ENCODE measurements at regions of chr10 and their contacts with region 1.

Region 1: GRCh38 chr10:71708301-71708703 is 11.3 kb downstream of the C10orf105 start:
- DNase-seq: peak; percentile 62 to 98
- H3K4me3 ChIP-seq: peak overlapping the region in 1 of 4 experiments; percentile 1; a peak in 1 of 8 replicates
- H3K27ac ChIP-seq: no peak overlapping the region
- H3K4me1 ChIP-seq: peaks cover 0 to 2% (median 0%) of the 10 kb centered on the region in 4 experiments; a peak in 2 of 7 replicates
- H3K27me3 ChIP-seq: peaks cover 0 to 3% (median 0%) of the 10 kb centered on the region in 4 experiments; a peak in 1 of 7 replicates
- CTCF ChIP-seq: peak; percentile 95 to 99 (median 98)
- EP300 ChIP-seq: no peak
- POLR2A ChIP-seq: no peak
- RAD21 ChIP-seq: peak; percentile 98 to 99

Region 2: GRCh38 chr10:71486484-71487114 is 221.7 kb before region 1 on chr10:
- CTCF ChIA-PET with region 1: interaction called, 13 read pairs
- POLR2A ChIA-PET with region 1: no interaction called
- DNase-seq: peak in 1 of 2 experiments; percentile 93
- H3K4me3 ChIP-seq: no peak overlapping the region
- H3K27ac ChIP-seq: no peak overlapping the region
- H3K4me1 ChIP-seq: peaks cover 0 to 6% (median 1%) of the 10 kb centered on the region in 4 experiments; a peak in 3 of 7 replicates
- H3K27me3 ChIP-seq: no peaks in the 10 kb centered on the region
- CTCF ChIP-seq: peak; percentile 92 to 99 (median 96)
- EP300 ChIP-seq: no peak
- POLR2A ChIP-seq: no peak
- RAD21 ChIP-seq: peak; percentile 92 to 94

Region 3: DNA sequence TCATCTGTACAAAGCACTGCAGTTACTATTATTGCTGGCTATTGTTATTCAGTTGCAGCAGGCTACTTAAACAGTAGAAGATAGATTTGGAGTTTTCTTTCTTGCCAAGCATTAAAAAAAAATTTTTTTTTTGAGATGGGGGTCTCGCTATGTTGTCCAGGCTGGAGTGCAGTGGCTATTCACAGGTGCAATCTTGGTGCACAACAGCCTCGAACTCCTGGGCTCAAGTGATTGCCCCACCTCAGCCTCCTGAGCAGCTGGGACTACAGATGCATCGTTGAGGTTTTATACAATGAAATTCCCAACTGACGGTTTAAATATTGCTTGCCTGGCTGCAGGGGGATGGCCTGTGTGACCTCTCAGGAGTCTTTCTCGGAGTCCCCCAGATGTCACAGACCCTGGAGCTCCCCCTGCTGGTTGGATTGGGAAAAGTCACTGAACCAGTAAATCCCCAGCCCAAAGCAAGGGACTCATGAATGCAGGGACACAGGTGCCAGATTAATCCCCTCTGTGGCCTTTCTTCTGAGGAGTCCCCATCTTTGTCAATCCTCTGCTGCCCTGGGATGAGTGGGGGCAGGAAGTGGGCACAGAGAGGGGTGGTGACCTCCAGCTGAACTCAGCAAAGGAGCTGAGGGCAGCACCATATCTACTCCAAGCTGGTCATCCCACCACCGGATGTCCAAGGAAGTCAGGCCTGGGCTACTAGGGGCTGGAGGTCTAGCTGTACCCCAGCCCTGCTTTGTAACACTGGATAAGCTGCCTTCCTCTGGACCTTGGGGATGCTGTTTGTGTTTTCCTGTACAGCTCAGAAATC is 138.3 kb before region 1 on chr10:
- CTCF ChIA-PET with region 1: interaction called, 20 read pairs
- POLR2A ChIA-PET with region 1: no interaction called
- DNase-seq: peak; percentile 59 to 98
- H3K4me3 ChIP-seq: no peak overlapping the region
- H3K27ac ChIP-seq: no peak overlapping the region
- H3K4me1 ChIP-seq: peaks cover 3 to 11% (median 6%) of the 10 kb centered on the region in 4 experiments; a peak in 5 of 7 replicates
- H3K27me3 ChIP-seq: 0 out of 7 replicates have a peak, but pooled peaks cover 0 to 2% (median 0%) of the 10 kb centered on the region in 4 experiments
- CTCF ChIP-seq: peak; percentile 74 to 93 (median 89)
- EP300 ChIP-seq: no peak
- POLR2A ChIP-seq: no peak
- RAD21 ChIP-seq: peak; percentile 87 to 93

Region 4: GRCh38 chr10:71647526-71648253 is 60.6 kb before region 1 on chr10:
- CTCF ChIA-PET with region 1: interaction called, 30 read pairs
- POLR2A ChIA-PET with region 1: no interaction called
- DNase-seq: peak in 1 of 2 experiments; percentile 78
- H3K4me3 ChIP-seq: no peak overlapping the region
- H3K27ac ChIP-seq: no peak overlapping the region
- H3K4me1 ChIP-seq: peaks cover 10 to 14% (median 10%) of the 10 kb centered on the region in 4 experiments
- H3K27me3 ChIP-seq: no peaks in the 10 kb centered on the region
- CTCF ChIP-seq: peak; percentile 73 to 84 (median 83)
- EP300 ChIP-seq: no peak
- POLR2A ChIP-seq: no peak
- RAD21 ChIP-seq: peak; percentile 46 to 74

Region 5: GRCh38 chr10:71696628-71697326 is 11.5 kb before region 1 on chr10:
- CTCF ChIA-PET with region 1: interaction called, 169 read pairs
- POLR2A ChIA-PET with region 1: interaction called, 3 read pairs
- DNase-seq: peak; percentile 41 to 95
- H3K4me3 ChIP-seq: no peak overlapping the region
- H3K27ac ChIP-seq: no peak overlapping the region
- H3K4me1 ChIP-seq: no peaks in the 10 kb centered on the region; a peak in 1 of 7 replicates
- H3K27me3 ChIP-seq: no peaks in the 10 kb centered on the region
- CTCF ChIP-seq: peak; percentile 94 to 95 (median 95)
- EP300 ChIP-seq: no peak
- POLR2A ChIP-seq: no peak
- RAD21 ChIP-seq: peak; percentile 81 to 87

Region 6: GRCh38 chr10:71748671-71749191 is 40.4 kb after region 1 on chr10:
- CTCF ChIA-PET with region 1: interaction called, 15 read pairs
- POLR2A ChIA-PET with region 1: no interaction called
- DNase-seq: no peak
- H3K4me3 ChIP-seq: no peak overlapping the region
- H3K27ac ChIP-seq: no peak overlapping the region
- H3K4me1 ChIP-seq: peaks cover 1 to 8% (median 4%) of the 10 kb centered on the region in 4 experiments; a peak in 5 of 7 replicates
- H3K27me3 ChIP-seq: 0 out of 7 replicates have a peak, but pooled peaks cover 0 to 2% (median 0%) of the 10 kb centered on the region in 4 experiments
- CTCF ChIP-seq: peak in 2 of 3 experiments; percentile 12; a peak in 1 of 4 replicates
- EP300 ChIP-seq: no peak
- POLR2A ChIP-seq: no peak
- RAD21 ChIP-seq: no peak

Region 7: DNA sequence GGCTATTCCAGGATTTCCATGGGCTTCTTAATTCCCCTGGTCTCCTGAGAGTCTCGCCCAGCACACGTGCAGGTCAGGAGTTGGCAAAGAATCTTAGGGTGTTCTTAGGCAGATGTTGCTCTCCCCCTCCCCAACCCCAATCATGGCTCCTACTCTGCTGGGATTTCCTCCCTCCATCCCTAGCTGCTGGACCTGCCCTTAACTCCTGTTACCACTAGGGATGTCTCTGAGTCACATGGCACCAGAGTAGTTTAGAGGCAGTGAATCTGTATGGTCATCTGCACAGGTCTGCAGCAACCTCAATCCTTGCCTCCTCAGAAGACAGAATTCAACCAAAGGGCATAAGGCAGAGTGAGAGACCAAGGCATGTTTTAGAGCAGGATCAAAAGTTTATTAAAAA is 204.1 kb after region 1 on chr10:
- CTCF ChIA-PET with region 1: no interaction called
- POLR2A ChIA-PET with region 1: no interaction called
- DNase-seq: no peak
- H3K4me3 ChIP-seq: no peak overlapping the region
- H3K27ac ChIP-seq: no peak overlapping the region
- H3K4me1 ChIP-seq: no peaks in the 10 kb centered on the region
- H3K27me3 ChIP-seq: no peaks in the 10 kb centered on the region
- CTCF ChIP-seq: peak; percentile 14 to 46 (median 15); a peak in 3 of 4 replicates
- EP300 ChIP-seq: no peak
- POLR2A ChIP-seq: no peak
- RAD21 ChIP-seq: no peak

Measured in H1 (cell line).